ENCODE measurements at regions of chr17 and their contacts with region 1.

Region 1: DNA sequence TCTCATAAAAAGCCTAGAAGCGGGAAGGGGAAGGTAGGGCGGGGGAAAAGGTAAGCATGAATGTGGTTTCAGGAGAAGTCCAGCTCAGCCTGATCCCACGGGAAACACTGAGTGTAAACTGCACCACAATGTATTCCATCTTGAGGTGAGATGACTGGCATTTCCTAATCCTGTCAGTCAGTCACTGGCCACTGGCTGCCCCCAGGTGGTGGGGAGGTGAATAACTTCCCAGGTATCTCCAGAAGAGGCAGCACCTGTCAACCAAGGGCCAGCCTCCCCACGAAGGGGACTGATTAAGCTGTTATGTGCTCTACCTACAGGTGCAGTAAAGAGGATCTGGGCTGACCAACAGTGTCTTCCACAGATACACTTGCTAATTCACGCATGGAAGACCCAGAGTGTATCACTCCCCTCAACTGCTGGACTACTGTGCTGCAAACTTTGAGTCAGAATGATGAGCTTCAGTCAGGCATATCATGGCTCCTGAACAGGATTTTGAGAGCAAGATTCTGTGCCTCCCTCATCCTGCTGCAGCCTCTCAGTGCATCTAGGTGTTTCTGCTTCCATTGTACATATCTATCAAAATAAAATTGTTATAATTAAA is 108.5 kb upstream of the CCL2 start:
- DNase-seq: peak; percentile 45 to 87
- H3K4me3 ChIP-seq: no peak overlapping the region
- CTCF ChIP-seq: no peak
- POLR2A ChIP-seq: no peak

Region 2: GRCh38 chr17:33927732-33928133 is 218.8 kb before region 1 on chr17:
- intact Hi-C with region 1: loop called (anchors 5 kb)
- DNase-seq: no peak
- H3K4me3 ChIP-seq: no peak overlapping the region
- CTCF ChIP-seq: no peak
- POLR2A ChIP-seq: no peak

Measured in lower leg skin (tissue), 4 donors.